A673 (cell line): ENCODE measurements at regions of chr5 and their contacts with region 1.

Region 1: GRCh38 chr5:21919410-21920022 is 933.6 kb downstream of the CDH12 start:
- DNase-seq: peak; percentile 89
- H3K4me3 ChIP-seq: no peak overlapping the region
- H3K27ac ChIP-seq: no peak overlapping the region
- H3K4me1 ChIP-seq: peaks cover 39% of the 10 kb centered on the region
- H3K27me3 ChIP-seq: no peaks in the 10 kb centered on the region
- CTCF ChIP-seq: peak; percentile 91

Region 2: DNA sequence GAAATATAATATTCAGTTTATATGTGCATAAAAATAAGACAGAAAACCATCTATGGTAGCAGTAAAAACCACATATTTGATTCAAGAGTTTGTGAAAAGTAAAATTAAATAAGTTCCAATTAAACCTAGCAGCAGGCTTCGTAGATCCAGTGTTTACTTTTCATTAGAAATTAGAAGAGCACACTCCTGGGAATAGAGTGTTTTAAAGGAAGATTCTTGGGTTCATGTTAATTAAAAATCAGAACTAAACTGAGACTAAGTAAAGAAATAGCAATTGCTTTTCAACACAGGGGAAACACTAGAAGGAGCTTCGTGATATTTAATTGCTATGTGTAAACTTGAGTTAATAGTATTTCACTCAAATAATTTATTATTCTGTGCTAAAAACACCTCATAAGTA is 833.7 kb before region 1 on chr5:
- CTCF ChIA-PET with region 1: no interaction called
- POLR2A ChIA-PET with region 1: no interaction called
- intact Hi-C with region 1: no loop called
- DNase-seq: no peak
- H3K4me3 ChIP-seq: no peak overlapping the region
- H3K27ac ChIP-seq: no peak overlapping the region
- H3K4me1 ChIP-seq: no peaks in the 10 kb centered on the region
- H3K27me3 ChIP-seq: no peaks in the 10 kb centered on the region
- CTCF ChIP-seq: no peak

Region 3: DNA sequence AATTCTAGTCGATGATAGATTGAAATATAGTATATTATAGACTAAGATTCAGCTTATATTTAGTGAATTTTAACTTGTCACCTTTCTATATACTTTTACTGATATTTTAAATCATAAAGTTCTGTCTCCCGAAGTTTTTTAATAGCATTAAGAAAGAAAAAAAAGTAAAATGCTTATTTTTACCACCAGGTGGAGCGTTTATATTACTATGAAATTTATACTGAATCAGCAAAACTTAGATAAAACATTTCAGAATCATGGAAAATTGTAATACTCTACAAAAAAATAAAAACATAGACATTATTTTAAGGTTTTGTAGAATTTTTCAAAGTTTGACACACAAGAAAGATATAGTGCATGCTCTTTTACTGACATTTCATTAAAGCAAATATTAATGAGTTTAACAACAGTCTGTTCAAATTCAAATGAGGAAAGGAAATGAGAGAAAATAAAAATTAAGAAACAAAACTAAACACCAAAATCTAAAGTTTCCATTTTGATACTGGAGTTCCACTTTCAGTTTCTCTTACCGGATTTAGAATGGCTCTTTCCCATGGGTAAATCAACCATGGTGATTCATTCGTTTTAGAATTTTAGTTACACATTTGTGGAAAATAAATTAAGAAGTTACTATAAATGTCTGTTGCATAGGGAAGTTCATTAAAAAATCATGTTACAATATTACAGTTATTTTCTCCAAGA is 101.7 kb before region 1 on chr5:
- CTCF ChIA-PET with region 1: no interaction called
- POLR2A ChIA-PET with region 1: no interaction called
- intact Hi-C with region 1: loop called (anchors 5 kb)
- DNase-seq: peak; percentile 65
- H3K4me3 ChIP-seq: peak overlapping the region; percentile 13
- H3K27ac ChIP-seq: peak overlapping the region; percentile 63
- H3K4me1 ChIP-seq: peaks cover 44% of the 10 kb centered on the region
- H3K27me3 ChIP-seq: no peaks in the 10 kb centered on the region
- CTCF ChIP-seq: peak; percentile 64

Region 4: GRCh38 chr5:21881457-21881856 is 38.1 kb before region 1 on chr5:
- CTCF ChIA-PET with region 1: no interaction called
- POLR2A ChIA-PET with region 1: no interaction called
- intact Hi-C with region 1: loop called (anchors 2 kb)
- DNase-seq: peak; percentile 68
- H3K4me3 ChIP-seq: no peak overlapping the region
- H3K27ac ChIP-seq: peak overlapping the region; percentile 98
- H3K4me1 ChIP-seq: peaks cover 41% of the 10 kb centered on the region
- H3K27me3 ChIP-seq: no peaks in the 10 kb centered on the region
- CTCF ChIP-seq: peak; percentile 27; the same call in 1 of the 2 replicates

Region 5: GRCh38 chr5:22033066-22033465 is 113.5 kb after region 1 on chr5:
- CTCF ChIA-PET with region 1: no interaction called
- POLR2A ChIA-PET with region 1: no interaction called
- intact Hi-C with region 1: no loop called
- DNase-seq: peak; percentile 25
- H3K4me3 ChIP-seq: no peak overlapping the region
- H3K27ac ChIP-seq: no peak overlapping the region
- H3K4me1 ChIP-seq: peaks cover 22% of the 10 kb centered on the region
- H3K27me3 ChIP-seq: no peaks in the 10 kb centered on the region
- CTCF ChIP-seq: no peak

Region 6: GRCh38 chr5:22341406-22341805 is 421.9 kb after region 1 on chr5:
- CTCF ChIA-PET with region 1: no interaction called
- POLR2A ChIA-PET with region 1: no interaction called
- intact Hi-C with region 1: no loop called
- DNase-seq: no peak
- H3K4me3 ChIP-seq: no peak overlapping the region
- H3K27ac ChIP-seq: no peak overlapping the region
- H3K4me1 ChIP-seq: no peaks in the 10 kb centered on the region
- H3K27me3 ChIP-seq: no peaks in the 10 kb centered on the region
- CTCF ChIP-seq: no peak